CD4-positive, alpha-beta memory T cell (primary cell): ENCODE measurements at regions of chr2 and their contacts with region 1.

Region 1: GRCh38 chr2:27953077-27953476 is 62.5 kb downstream of the BABAM2 start:
- DNase-seq: no peak
- H3K4me3 ChIP-seq: no peak overlapping the region
- H3K4me3 Mint-ChIP-seq: no peak overlapping the region
- H3K27ac ChIP-seq: no peak overlapping the region
- H3K27ac Mint-ChIP-seq: peak overlapping the region in 1 of 7 donors; percentile 29
- H3K4me1 ChIP-seq: peaks cover 37% of the 10 kb centered on the region
- H3K4me1 Mint-ChIP-seq: peaks cover 40 to 75% (median 54%) of the 10 kb centered on the region in 4 donors
- H3K27me3 ChIP-seq: no peaks in the 10 kb centered on the region
- H3K27me3 Mint-ChIP-seq: no peaks in the 10 kb centered on the region

Region 2: GRCh38 chr2:27723372-27724144 is 229.5 kb before region 1 on chr2:
- CTCF ChIA-PET with region 1: no interaction called
- POLR2A ChIA-PET with region 1: no interaction called
- intact Hi-C with region 1: no loop called
- DNase-seq: no peak
- H3K4me3 ChIP-seq: no peak overlapping the region
- H3K4me3 Mint-ChIP-seq: no peak overlapping the region
- H3K27ac ChIP-seq: no peak overlapping the region
- H3K27ac Mint-ChIP-seq: no peak overlapping the region
- H3K4me1 ChIP-seq: no peaks in the 10 kb centered on the region
- H3K4me1 Mint-ChIP-seq: peaks cover 0 to 6% (median under 1%) of the 10 kb centered on the region in 4 donors
- H3K27me3 ChIP-seq: no peaks in the 10 kb centered on the region
- H3K27me3 Mint-ChIP-seq: peaks cover 7 to 12% of the 10 kb centered on the region in 2 donors

Region 3: DNA sequence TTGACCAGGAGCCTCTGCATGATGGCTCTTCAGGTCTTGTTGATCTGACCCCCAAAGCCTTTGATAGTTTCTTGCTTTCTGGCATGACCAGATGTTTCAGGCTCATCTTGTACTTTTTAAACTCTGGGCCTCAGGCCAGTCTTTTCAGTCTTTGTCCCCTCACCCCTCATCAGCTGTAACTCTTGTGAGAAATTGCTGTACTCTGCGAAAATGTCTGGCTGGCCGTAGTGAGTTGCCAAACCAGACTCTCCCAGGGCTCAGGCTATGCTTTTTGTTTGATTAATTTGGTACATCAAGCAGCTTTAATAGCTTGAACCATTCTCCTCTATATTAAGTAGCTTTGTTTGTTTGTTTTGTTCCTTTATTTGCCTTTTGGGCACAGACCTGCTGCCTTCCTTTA is 13.4 kb after region 1 on chr2:
- CTCF ChIA-PET with region 1: no interaction called
- POLR2A ChIA-PET with region 1: interaction called, 6 read pairs
- intact Hi-C with region 1: loop called (anchors 2 kb)
- DNase-seq: no peak
- H3K4me3 ChIP-seq: peak overlapping the region in 1 of 2 donors; percentile 6
- H3K4me3 Mint-ChIP-seq: peak overlapping the region in 6 of 8 donors; percentile 29 to 76 (median 72)
- H3K27ac ChIP-seq: peak overlapping the region; percentile 32
- H3K27ac Mint-ChIP-seq: peak overlapping the region; percentile 84 to 98 (median 93)
- H3K4me1 ChIP-seq: peaks cover 22% of the 10 kb centered on the region
- H3K4me1 Mint-ChIP-seq: peaks cover 21 to 53% (median 42%) of the 10 kb centered on the region in 4 donors
- H3K27me3 ChIP-seq: no peaks in the 10 kb centered on the region
- H3K27me3 Mint-ChIP-seq: no peaks in the 10 kb centered on the region